Activated CD8-positive, alpha-beta T cell treated with anti-CD3 and anti-CD28 coated beads, Interleukin-2, amount 10 ng/mL, durations not matched to agents 7 days and 5 days (primary cell): ENCODE measurements at regions of chr17 and their contacts with region 1.

Region 1: GRCh38 chr17:27332485-27333409 is 38.8 kb downstream of the WSB1 start:
- DNase-seq: peak; percentile 92
- ATAC-seq: peak; percentile 98
- H3K4me3 Mint-ChIP-seq: peak overlapping the region; percentile 66
- H3K27ac Mint-ChIP-seq: peak overlapping the region; percentile 75
- H3K4me1 Mint-ChIP-seq: peaks cover 21% of the 10 kb centered on the region
- H3K27me3 Mint-ChIP-seq: no peaks in the 10 kb centered on the region

Region 2: DNA sequence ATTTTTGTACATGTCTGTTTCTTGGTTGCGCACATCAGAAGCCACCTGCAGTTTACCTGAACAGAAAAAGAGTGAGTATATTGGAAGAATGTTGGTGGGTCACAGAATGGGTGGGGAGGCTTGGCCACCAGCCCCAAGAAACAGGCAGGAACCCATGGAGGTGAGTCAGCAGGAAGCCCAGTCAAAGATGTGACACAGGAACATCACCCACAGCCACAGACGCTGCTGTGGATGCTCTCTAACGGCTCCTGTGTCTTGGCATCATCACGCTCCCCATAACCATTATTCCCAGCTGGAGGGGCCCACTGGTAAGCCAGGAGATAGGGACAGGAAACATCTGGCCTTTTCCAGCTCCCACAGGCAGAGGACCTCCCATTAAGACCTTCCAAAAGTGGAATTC is 132.8 kb before region 1 on chr17:
- CTCF ChIA-PET with region 1: interaction called, 11 read pairs
- POLR2A ChIA-PET with region 1: no interaction called
- DNase-seq: no peak
- ATAC-seq: no peak
- H3K4me3 Mint-ChIP-seq: no peak overlapping the region
- H3K27ac Mint-ChIP-seq: no peak overlapping the region
- H3K4me1 Mint-ChIP-seq: peaks cover 6% of the 10 kb centered on the region
- H3K27me3 Mint-ChIP-seq: peaks cover 6% of the 10 kb centered on the region

Region 3: GRCh38 chr17:27245230-27245696 is 87.5 kb before region 1 on chr17:
- CTCF ChIA-PET with region 1: interaction called, 21 read pairs
- POLR2A ChIA-PET with region 1: no interaction called
- DNase-seq: peak; percentile 62
- ATAC-seq: peak; percentile 95
- H3K4me3 Mint-ChIP-seq: no peak overlapping the region
- H3K27ac Mint-ChIP-seq: no peak overlapping the region
- H3K4me1 Mint-ChIP-seq: peaks cover 13% of the 10 kb centered on the region
- H3K27me3 Mint-ChIP-seq: peaks cover 12% of the 10 kb centered on the region

Region 4: DNA sequence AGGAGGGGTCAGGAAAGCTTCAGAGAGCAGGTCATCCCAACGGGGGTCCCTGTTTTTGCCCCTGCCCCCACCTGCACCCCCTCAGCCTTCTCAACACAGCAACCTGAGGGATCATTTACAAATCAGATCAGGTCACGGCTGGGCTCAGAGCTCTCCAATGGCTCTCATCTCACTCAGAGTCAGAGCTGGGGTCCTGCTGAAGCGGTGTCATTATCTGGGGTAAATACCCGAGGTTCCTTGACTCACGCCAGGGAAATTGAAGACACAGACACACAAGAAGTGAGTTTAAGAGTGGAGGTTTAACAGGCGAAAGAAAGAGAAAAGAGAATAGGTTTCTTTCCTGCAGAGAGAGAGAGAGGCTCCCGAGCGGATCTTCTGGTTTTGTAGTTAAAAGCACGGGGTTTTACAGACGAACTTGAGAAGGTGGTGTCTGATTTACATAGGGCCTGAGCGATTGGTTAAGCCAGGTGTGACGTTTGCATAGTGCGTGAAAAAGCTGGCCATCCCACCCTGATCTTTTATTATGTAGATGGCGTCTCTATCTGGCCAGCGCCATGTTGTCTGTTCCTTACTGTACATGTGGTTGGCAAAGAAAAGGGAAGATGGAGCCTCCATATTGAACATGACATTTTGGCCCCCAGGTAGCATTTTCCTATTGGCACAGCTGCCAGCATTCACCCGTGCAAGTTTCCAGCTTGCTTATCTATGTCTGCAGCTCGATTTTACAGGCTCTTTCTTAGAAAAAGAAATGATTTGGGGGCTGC is 12.6 kb after region 1 on chr17:
- CTCF ChIA-PET with region 1: interaction called, 12 read pairs
- POLR2A ChIA-PET with region 1: no interaction called
- DNase-seq: no peak
- ATAC-seq: no peak
- H3K4me3 Mint-ChIP-seq: no peak overlapping the region
- H3K27ac Mint-ChIP-seq: no peak overlapping the region
- H3K4me1 Mint-ChIP-seq: peaks cover 20% of the 10 kb centered on the region
- H3K27me3 Mint-ChIP-seq: no peaks in the 10 kb centered on the region